ENCODE measurements at regions of chr6 and their contacts with region 1.

Region 1: DNA sequence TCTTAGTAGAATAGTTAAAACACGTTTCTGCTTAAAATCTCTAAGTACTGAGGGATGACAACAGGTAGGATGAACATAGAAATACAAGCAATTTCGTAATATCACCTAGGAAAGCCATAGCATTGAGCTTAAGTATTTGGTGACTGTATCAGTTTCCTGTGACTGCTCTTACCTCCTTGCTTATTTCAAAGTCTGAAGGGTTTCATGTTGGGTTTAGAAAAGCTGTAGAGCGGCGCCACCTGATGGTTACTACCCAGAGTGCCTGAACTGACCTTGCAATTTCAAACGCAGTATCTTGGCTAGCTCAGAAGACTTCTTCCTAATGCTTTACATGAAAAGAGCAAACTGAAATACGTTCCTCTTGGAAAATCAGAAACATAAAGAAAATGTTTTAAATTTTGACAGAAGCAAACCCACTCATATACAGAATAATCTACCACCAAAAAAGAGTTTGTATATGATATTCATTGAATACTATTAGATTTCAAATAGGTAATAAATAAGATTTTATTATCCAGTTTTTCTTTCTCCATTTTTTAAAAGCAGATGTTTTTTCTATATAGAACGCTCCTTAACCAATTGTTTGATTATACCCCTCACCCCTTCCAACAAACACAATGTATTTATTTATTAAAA is 82.3 kb upstream of the RIPOR2 start:
- DNase-seq: peak; percentile 87
- H3K4me3 ChIP-seq: peak overlapping the region; percentile 10
- H3K27ac ChIP-seq: peak overlapping the region; percentile 46
- H3K4me1 ChIP-seq: peaks cover 51% of the 10 kb centered on the region
- CTCF ChIP-seq: peak; percentile 98

Region 2: GRCh38 chr6:24689964-24690363 is 328.1 kb before region 1 on chr6:
- CTCF ChIA-PET with region 1: no interaction called
- POLR2A ChIA-PET with region 1: no interaction called
- intact Hi-C with region 1: loop called (anchors 10 kb)
- DNase-seq: no peak
- H3K4me3 ChIP-seq: no peak overlapping the region
- H3K27ac ChIP-seq: no peak overlapping the region
- H3K4me1 ChIP-seq: peaks cover 7% of the 10 kb centered on the region
- CTCF ChIP-seq: no peak

Region 3: GRCh38 chr6:24774696-24775519 is 243.1 kb before region 1 on chr6 and contains the start of gene GMNN:
- CTCF ChIA-PET with region 1: no interaction called
- POLR2A ChIA-PET with region 1: interaction called, 4 read pairs
- intact Hi-C with region 1: loop called (anchors 5 kb)
- DNase-seq: peak; percentile 98
- H3K4me3 ChIP-seq: peak within 1 kb of the TSS; percentile 95
- H3K27ac ChIP-seq: peak within 1 kb of the TSS; percentile 94
- H3K4me1 ChIP-seq: peaks cover 36% of the 10 kb centered on the region
- CTCF ChIP-seq: no peak
- total RNA-seq, gene GMNN: 101 and 130 TPM in 2 replicates

Region 4: GRCh38 chr6:24788048-24788665 is 229.9 kb before region 1 on chr6:
- CTCF ChIA-PET with region 1: no interaction called
- POLR2A ChIA-PET with region 1: no interaction called
- intact Hi-C with region 1: loop called (anchors 5 kb)
- DNase-seq: no peak
- H3K4me3 ChIP-seq: no peak overlapping the region
- H3K27ac ChIP-seq: no peak overlapping the region
- H3K4me1 ChIP-seq: no peaks in the 10 kb centered on the region
- CTCF ChIP-seq: no peak

Region 5: GRCh38 chr6:24961852-24962251 is 56.2 kb before region 1 on chr6:
- CTCF ChIA-PET with region 1: no interaction called
- POLR2A ChIA-PET with region 1: interaction called, 10 read pairs
- intact Hi-C with region 1: no loop called
- DNase-seq: no peak
- H3K4me3 ChIP-seq: no peak overlapping the region
- H3K27ac ChIP-seq: no peak overlapping the region
- H3K4me1 ChIP-seq: no peaks in the 10 kb centered on the region
- CTCF ChIP-seq: no peak

Measured in OCI-LY7 (cell line).